Posterior vena cava (tissue), 2 donors: ENCODE measurements at regions of chr1 and their contacts with region 1.

Region 1: DNA sequence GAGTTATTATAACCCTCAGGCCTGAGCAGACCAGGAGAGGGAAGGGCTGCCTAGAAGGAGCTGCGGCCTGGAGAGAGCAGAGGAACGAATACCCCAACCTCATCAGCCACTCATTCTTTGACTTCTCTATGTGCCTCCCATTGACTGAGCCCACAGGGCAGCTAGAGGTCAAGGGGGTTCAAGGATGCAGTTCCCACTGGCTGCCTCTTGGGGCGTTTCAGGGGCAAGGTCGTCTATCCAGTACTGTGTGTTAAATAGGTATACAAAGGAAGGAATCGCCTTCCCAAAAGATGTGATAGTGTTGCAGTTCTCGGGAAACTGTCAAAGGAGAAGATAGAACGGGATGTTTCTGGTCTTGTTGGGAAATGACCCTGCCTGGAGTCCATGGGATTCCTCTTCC is 250.6 kb downstream of the PRDM2 start:
- DNase-seq: no peak

Region 2: DNA sequence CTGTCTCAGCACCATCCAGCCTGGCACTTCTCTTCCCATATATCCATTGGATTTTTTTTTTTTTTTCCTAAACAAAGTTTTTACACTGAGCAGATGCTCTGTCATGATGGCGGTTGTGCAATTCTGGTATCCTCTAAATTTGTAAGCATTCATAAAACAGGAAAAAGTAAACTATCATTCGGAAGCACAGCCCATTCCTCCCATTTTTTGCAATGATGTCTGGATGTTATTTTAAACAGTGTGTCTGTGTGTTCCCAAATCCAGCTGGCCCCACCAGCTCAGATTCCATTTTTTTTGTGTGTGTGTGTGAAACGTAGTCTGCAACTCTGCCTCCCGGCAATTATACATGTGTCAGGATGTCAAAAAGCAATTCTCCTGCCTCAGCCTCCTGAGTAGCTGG is 333.5 kb before region 1 on chr1:
- intact Hi-C with region 1: no loop called
- DNase-seq: peak; percentile 12

Region 3: DNA sequence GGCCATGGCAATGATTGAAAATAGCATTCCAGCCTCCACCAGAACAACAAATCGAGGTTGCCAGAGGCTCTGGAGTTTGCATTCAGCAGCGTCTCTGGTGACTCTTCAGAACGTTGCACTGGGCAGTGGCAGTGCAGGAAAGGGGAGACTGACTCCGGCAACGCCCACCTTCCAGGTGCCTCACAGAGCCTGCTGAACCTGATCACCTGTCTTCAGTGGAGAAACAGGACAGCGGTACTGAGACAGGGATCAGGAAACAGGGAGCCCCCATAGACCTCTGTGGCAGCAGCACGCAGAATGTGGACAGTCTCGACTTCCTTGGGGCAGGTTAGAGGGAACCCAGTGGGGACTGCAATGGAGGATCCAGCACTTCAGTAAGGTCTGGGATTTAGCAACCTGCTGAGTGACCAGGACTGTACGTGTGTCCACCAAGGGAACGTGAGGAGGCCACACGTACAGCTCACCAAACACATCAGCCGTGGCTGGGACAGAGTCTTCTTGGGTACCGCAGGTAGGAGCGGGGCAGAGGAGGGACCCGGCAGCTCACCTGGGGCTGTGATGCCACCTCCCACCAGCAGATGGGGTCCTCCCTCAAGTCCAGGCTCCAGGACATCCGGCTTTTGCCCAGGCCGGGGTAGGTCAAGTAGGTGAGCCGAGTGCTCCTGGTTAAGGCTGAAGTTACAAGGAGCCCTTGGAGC is 122.0 kb before region 1 on chr1:
- intact Hi-C with region 1: loop called in 1 of 2 experiments (anchors 10 kb)
- DNase-seq: no peak